ENCODE measurements at regions of chr16 and their contacts with region 1.

Region 1: DNA sequence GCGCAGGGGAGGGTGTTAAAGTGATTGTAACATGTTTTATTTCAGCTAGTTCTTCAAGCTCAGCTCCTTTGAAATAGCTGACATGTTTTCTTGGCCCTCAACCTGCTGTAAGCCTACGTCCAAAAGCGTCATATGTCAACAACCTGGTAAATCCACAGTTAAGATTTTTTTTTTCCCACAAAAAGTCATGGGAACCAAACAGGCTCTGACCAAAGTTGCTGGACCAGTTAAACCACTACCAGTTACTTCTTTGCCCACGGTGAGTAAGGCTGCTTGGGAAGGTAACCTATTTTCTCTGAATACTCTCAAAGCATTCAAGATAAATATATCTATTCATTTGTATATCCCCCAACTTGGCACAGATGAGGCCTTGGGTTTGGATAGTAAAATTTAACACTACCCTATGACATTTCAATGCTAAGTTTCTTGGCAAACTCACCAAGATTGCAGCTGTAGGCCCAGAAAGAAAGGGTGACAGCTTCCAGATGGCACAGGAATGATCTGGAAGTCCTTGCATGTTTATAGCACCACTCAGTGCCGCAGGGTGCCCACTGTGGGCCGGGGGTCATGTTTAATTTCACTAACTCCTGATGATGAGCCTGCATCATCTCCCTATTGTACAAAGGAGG is 166.2 kb downstream of the XYLT1 start:
- DNase-seq: peak; percentile 92
- H3K4me3 ChIP-seq: no peak overlapping the region
- H3K27ac ChIP-seq: peak overlapping the region; percentile 75 to 97 (median 96)
- H3K4me1 ChIP-seq: peaks cover 0 to 80% (median 62%) of the 10 kb centered on the region in 4 donors
- H3K27me3 ChIP-seq: no peaks in the 10 kb centered on the region
- CTCF ChIP-seq: no peak
- EP300 ChIP-seq: peak; percentile 62 to 95 (median 78)
- POLR2A ChIP-seq: no peak

Region 2: DNA sequence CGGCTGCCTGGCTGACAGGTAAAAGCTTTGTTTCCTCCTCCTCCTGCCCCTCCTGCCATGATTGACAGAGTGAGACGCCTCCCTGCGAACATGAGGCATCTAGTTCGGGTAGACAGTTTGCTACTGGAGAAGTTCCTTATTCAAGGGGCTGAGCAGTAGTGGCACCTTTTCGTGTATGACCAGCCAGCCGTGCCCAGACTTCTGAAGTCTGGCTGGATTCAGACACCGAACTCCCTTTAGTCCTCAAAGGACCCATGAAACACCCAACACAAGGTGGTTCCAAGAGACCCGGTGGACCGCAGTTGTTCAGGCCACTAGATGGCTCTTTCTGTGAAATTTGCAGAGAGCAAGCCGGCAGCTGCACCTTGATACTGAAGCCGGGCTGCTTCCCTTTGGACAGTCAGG is 26.6 kb before region 1 on chr16:
- intact Hi-C with region 1: loop called (anchors 5 kb)
- DNase-seq: no peak
- H3K4me3 ChIP-seq: no peak overlapping the region
- H3K27ac ChIP-seq: peak overlapping the region in 2 of 4 donors; percentile 4 to 40
- H3K4me1 ChIP-seq: peaks cover 0 to 33% (median 30%) of the 10 kb centered on the region in 4 donors
- H3K27me3 ChIP-seq: no peaks in the 10 kb centered on the region
- CTCF ChIP-seq: peak in 2 of 4 experiments; percentile 33
- EP300 ChIP-seq: no peak
- POLR2A ChIP-seq: no peak

Region 3: GRCh38 chr16:17289674-17290635 is 14.7 kb before region 1 on chr16:
- intact Hi-C with region 1: no loop called
- DNase-seq: no peak
- H3K4me3 ChIP-seq: no peak overlapping the region
- H3K27ac ChIP-seq: peak overlapping the region in 1 of 4 donors; percentile 6
- H3K4me1 ChIP-seq: peaks cover 0 to 26% (median 19%) of the 10 kb centered on the region in 4 donors
- H3K27me3 ChIP-seq: no peaks in the 10 kb centered on the region
- CTCF ChIP-seq: no peak
- EP300 ChIP-seq: no peak
- POLR2A ChIP-seq: no peak

Measured in sigmoid colon (tissue), 7 donors.